ENCODE measurements at regions of chr2 and their contacts with region 1.

Region 1: GRCh38 chr2:173075781-173076580 is at the start of gene MAP3K20:
- DNase-seq: peak; percentile 89
- ATAC-seq: peak; percentile 81
- total RNA-seq, gene MAP3K20: 402 TPM

Region 2: GRCh38 chr2:173037245-173038120 is 38.5 kb before region 1 on chr2:
- intact Hi-C with region 1: loop called (anchors 5 kb)
- DNase-seq: peak; percentile 66
- ATAC-seq: peak; percentile 86

Region 3: GRCh38 chr2:173205375-173205774 is 129.4 kb after region 1 on chr2:
- intact Hi-C with region 1: loop called (anchors 5 kb)
- DNase-seq: peak; percentile 82
- ATAC-seq: peak; percentile 93

Measured in Right ventricle myocardium superior (tissue), 1 donor.